ENCODE measurements at regions of chr7 and their contacts with region 1.

Region 1: DNA sequence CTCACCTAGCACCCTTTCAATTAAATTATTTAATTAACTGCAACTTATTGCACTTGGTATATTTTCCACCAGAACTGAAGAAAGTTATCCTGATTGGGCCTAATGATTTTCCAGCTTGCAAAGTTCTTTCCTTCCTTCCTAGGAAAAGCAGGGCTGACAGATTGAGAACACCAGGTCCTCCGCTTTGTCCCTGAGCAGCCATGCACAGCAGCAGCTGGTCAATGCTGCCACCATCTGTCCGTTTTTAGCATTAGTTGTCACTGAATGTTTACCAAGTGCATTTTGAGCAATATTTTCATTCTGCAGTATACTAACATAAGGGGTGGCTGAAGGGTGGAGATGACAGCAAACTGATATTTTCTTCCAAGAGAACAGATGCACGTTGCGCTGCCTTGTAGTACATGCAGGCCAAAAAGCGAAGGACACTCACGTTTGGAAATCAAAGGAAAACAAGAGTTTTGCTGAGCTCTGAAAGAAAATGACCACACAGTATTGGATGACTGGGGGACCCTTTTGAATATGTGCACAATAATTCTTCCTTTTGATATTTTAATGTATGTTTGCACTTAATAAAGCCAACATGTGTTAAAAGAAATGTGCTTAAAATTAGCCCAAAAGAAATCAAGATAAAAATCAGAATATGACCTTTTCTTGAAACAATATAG is 248.8 kb upstream of the PTN start:
- DNase-seq: no peak
- H3K4me3 Mint-ChIP-seq: no peak overlapping the region
- H3K27ac Mint-ChIP-seq: no peak overlapping the region
- H3K4me1 Mint-ChIP-seq: no peaks in the 10 kb centered on the region
- H3K27me3 Mint-ChIP-seq: peaks cover 2% of the 10 kb centered on the region

Region 2: DNA sequence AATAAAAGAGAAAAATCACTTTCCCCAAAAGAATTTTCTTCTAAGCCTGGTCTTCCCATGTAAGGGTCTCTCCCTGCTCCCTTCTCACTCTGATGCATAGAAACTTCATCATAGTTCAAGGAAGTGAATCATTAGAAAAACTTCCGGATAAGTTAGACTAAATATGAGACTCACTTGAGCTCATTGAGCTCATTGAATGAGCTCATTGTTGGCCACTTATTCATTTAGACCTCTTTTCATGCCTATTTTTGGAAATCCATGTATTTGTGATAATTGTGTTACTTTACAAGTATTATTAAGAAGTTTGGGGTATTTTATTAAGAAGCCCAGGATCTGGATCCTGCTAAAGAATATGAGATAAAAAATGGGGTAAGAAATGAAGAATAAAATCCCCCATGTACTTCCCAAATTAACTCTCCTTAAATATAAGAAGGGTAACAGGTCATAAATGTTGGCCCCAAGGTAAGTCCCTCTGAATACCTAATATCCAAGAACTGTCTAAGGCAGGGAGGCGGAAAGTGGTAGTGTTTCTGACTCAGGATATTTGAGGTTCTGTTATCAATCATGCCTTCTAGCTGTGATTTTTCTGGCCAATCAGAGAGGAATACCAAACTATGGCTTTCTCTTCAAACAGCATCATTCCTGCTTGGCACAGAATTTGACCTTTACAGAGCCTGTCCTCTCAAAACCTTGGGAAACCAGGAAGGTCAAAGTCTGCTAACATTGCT is 12.3 kb before region 1 on chr7:
- CTCF ChIA-PET with region 1: no interaction called
- POLR2A ChIA-PET with region 1: no interaction called
- DNase-seq: no peak
- H3K4me3 Mint-ChIP-seq: no peak overlapping the region
- H3K27ac Mint-ChIP-seq: no peak overlapping the region
- H3K4me1 Mint-ChIP-seq: no peaks in the 10 kb centered on the region
- H3K27me3 Mint-ChIP-seq: no peaks in the 10 kb centered on the region

Region 3: GRCh38 chr7:137606061-137606674 is 13.8 kb after region 1 on chr7:
- CTCF ChIA-PET with region 1: interaction called, 11 read pairs
- POLR2A ChIA-PET with region 1: no interaction called
- DNase-seq: no peak
- H3K4me3 Mint-ChIP-seq: no peak overlapping the region
- H3K27ac Mint-ChIP-seq: no peak overlapping the region
- H3K4me1 Mint-ChIP-seq: no peaks in the 10 kb centered on the region
- H3K27me3 Mint-ChIP-seq: peaks cover 12% of the 10 kb centered on the region